Posterior vena cava (tissue), 2 donors: ENCODE measurements at regions of chr4 and their contacts with region 1.

Region 1: GRCh38 chr4:32429151-32429550 is 1709.0 kb downstream of the PCDH7 start:
- DNase-seq: no peak

Region 2: DNA sequence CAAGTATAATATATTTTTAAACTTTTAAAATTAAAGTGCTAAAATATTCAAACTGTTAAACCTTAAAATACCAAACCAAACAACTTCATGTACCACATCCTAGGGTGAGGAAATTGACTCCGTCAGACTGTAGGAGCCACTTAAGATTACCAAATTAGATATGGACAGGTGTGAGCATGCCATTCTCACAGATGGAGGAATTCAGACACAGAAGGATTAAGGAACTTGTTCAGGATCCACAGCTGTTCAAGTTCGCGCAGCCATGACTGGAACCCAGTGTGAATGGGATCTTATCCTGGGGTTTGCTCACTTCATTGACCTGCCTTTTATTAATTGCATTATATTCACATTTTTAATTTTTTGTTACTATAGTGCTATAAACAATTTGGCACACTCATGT is 1933.9 kb before region 1 on chr4:
- intact Hi-C with region 1: no loop called
- DNase-seq: no peak

Region 3: DNA sequence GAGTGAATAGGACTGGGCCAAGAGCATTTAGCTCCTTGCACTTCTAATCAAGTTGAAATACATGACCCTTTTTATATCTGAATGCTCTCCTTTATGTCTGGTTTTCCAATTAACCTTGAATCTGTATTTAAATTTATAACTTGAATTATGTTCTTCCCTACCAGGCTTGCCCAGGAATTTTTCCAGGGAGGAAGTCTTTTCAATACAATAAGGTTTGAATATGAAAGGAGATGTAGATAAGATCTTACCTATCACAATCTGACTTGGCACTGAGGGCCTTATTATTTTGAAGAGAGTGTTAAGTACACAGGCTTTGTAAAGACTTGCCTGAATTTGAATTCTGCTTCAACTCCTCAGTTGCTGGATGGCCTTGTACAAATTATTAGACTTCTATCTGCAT is 1153.2 kb before region 1 on chr4:
- intact Hi-C with region 1: no loop called
- DNase-seq: no peak

Region 4: DNA sequence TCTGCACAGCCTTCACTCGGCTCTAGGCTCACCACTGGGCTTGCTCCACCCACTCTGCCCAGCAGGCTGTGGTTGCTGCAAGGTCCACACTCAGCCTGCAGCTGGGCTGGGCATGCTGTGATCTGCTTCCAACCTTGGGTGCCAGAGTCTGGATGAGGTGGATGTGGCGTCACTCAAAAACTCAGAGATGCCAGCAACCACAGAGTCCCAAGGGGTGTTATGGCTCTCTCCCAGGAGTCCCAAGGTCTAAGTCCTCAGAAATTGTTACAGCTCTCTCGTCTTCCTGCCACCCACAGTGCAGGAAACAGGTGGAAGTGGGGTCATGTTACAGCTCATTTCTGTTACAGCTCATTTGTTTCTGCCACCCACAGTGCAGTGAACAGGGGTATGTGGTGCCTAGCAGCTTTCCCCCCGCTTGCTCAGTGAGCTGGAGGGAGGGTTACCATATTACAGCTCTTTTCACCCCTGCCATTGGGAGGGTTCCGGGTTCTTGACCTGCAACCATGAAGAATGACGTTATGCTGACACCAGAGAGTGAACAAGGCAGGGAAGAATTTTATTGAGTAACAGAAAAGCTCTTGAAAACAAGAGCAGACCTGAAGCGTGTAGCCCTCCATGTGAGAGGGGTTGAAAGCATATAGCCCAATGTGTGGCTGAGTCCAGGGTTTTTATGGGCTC is 815.1 kb before region 1 on chr4:
- intact Hi-C with region 1: loop called in 1 of 2 experiments (anchors 5 kb)
- DNase-seq: no peak